GM10248 (cell line): ENCODE measurements at regions of chr2 and their contacts with region 1.

Region 1: GRCh38 chr2:231411831-231412617 is 16.5 kb downstream of the B3GNT7 start:
- DNase-seq: peak; percentile 89
- CTCF ChIP-seq: peak; percentile 97

Region 2: DNA sequence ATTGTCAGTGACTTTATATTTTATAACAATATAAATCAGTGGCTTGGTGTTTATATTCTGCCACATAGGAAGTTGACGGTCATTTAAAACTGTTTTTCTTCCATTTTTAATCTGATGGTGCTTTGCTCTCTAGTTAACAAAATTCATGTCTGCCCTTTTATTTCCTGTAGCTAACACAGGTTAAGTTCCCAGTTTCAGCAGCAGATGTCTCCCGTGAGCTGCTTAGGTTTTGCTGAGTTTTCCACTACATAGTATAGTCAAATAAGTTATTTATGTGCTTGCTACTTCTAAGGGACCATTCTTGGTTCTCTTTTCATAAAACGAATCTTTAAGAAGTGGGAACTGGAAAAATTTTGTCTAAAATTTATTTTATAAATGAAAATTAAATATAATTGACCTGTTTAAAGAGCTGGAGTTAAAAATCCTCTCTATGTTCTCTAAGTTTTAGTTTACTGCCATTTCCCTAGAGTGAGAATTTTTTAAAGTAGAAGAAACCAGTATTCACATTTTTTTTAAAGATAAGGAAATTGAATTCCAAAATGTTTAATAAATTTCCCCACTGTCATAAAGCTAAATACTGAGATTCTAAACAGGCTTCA is 307.8 kb before region 1 on chr2:
- CTCF ChIA-PET with region 1: interaction called, 148 read pairs
- POLR2A ChIA-PET with region 1: no interaction called
- DNase-seq: peak; percentile 56
- CTCF ChIP-seq: peak; percentile 88

Region 3: DNA sequence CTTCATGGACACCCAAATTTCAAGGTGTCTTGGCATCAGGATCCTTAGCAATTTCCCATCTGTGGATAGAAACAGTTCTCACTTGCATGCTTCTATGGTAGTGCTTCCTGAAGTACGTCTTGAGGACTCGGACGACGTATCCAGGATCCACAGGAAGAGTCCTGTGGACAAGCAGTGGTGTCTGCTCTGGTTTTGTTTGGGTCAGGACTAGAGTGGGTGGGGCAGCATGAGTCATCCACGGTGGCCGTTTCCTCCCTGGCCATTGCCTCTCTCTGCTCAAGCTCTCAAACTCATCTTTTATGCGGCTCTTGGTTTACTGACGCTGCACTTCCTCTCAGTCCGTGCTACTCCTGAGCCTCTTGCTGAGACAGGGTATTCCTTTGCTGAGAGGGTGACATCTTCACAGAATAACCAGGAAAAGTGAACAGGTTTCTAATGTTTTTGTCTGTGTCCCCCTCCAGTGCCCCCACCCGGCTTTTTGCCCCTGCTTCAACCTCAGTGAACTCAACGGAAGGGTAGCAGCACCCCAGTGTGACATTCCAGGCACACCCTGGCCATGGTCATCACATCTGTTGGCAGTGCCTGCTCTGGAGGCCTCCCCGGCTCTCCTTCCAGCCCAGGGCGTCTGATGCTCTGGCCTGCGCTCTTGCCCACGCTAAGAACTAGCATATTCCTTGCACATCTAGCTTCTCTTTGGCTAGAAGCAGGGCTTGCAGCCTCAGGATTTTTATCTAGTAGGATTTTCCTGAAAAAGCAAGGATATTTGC is 151.4 kb before region 1 on chr2:
- CTCF ChIA-PET with region 1: no interaction called
- POLR2A ChIA-PET with region 1: no interaction called
- DNase-seq: no peak
- CTCF ChIP-seq: no peak

Region 4: DNA sequence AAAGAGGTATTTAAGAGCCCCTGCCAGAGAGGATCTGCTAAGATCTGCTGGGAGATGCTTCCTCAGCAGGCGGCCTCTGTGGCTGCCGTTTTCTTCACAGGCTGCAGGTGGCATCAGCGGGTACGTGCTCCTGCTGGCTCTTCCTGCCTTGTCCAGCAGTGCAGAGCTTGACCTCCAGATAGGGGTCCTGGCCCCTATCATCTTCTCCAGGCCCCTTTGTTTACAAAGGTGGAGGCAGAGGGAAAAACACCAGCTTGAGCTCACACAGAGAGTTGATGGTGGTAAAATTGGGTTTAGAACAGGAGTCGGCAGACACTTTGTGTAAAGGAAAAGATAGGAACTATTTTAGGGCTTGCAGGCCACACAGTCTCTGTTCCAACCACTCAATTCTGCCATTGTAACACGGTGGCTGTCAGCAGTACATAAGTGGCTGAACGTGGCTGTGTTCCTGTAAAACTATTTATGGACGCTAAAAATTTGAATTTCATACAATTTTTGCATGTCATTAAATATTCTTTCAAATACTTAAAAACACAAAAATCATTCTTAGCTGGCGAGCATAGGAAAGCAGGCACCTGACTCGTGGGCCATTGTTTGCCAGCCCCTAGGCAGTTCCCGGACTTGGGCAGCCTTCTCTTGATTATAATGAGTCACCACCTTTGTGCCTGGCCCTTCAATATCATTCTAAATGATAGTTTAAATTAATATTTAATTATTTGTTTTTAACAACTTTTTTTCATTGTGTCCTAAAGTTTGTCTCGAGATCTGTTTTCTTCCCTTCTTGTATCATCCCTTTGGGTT is 114.7 kb before region 1 on chr2:
- CTCF ChIA-PET with region 1: interaction called, 48 read pairs
- POLR2A ChIA-PET with region 1: no interaction called
- DNase-seq: peak; percentile 85
- CTCF ChIP-seq: peak; percentile 86

Region 5: DNA sequence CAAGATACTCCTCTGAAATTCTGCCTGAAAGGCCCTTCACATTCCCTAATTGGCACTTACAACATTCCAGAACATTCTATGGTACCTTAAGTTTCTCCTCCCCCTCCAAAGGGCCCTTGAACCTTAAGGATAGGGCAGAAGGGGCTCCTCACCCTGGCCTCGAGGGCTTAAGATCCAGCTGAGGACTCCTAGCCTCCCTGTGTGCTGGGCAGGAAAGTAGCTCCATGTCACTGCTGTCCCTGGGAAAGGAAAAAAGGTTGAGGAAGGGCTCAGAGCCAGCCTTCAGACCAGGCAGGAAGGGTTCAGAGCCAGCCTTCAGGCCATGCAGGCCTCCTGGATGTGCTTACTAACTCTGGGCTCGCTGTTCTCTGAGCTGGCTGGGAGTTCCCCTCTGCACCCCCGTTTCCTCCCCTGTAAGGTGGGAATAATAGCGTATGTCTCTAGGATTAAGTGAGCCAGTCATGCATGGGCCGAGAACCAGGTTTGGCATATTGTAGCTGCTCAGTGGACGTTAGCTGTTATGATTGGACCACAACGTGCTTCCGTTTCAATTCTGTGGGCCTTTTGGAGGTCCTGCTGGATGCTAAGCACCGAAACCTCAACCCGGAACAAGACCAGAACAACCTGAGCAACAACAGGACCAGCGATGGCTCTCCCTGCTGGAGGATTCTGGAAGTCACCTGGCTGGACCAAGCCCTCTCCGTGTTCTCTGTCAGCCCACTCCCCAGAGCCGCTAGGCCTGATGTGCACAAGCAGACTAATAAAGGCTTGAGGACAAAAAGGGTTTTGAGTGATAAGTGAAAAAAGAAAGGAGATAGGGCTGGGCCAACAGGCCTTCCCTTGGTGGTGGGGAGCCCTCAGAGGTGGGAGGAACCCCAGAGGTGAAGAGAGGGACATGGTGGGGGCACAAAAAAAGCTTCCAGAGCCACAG is 17.5 kb before region 1 on chr2:
- CTCF ChIA-PET with region 1: interaction called, 62 read pairs
- POLR2A ChIA-PET with region 1: no interaction called
- DNase-seq: peak; percentile 82
- CTCF ChIP-seq: peak; percentile 61

Region 6: GRCh38 chr2:231399853-231400680 is 12.0 kb before region 1 on chr2:
- CTCF ChIA-PET with region 1: interaction called, 62 read pairs
- POLR2A ChIA-PET with region 1: no interaction called
- DNase-seq: no peak
- CTCF ChIP-seq: no peak

Region 7: DNA sequence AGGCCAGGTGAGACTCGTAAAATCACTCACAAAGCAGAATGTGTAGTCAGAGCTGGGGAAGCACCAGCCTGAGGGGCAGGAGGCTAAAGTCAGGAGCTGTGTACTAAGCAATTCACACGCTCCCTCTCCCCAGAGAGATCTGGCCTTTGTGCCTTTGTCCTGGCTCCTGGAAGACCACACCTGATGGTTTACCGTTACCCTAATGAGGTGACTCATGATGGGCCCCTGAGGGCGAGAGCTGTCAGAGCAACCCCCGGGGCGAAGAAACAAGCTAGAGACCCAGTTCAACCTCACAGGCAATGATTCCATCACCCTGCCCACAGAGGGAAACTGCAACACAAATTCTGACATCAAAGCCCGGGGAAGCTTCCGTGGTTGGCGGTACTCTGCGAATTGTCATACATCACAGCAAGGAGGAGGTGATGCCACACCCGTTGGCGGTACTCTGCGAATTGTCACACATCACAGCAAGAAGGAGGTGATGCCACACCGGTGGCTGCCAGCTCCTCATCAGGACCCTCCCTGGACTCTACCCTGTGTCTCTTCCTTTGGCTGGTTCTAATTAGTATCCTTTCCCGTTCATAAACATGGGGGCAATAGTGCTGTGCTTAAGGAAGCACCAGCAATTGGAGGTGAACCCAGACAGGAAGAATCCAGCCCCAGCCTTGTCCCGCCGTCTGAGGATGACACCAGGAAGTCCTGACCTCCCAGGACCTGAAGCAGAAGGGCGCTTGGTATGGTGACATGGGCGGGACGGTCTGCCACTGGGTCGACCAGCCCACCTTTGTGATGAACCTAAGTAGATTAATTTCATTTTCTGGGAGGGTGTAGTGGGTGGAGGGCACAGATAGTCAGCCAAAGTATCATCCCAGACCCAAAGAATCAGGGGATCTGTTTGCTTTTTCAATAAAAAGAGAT is 14.0 kb after region 1 on chr2:
- CTCF ChIA-PET with region 1: interaction called, 34 read pairs
- POLR2A ChIA-PET with region 1: no interaction called
- DNase-seq: no peak
- CTCF ChIP-seq: no peak

Region 8: GRCh38 chr2:231452799-231453508 is 40.9 kb after region 1 on chr2:
- CTCF ChIA-PET with region 1: interaction called, 11 read pairs
- POLR2A ChIA-PET with region 1: interaction called, 3 read pairs
- DNase-seq: no peak
- CTCF ChIP-seq: no peak

Region 9: GRCh38 chr2:231745303-231746038 is 333.4 kb after region 1 on chr2:
- CTCF ChIA-PET with region 1: no interaction called
- POLR2A ChIA-PET with region 1: no interaction called
- DNase-seq: no peak
- CTCF ChIP-seq: no peak